ENCODE measurements at regions of chr9 and their contacts with region 1.

Region 1: DNA sequence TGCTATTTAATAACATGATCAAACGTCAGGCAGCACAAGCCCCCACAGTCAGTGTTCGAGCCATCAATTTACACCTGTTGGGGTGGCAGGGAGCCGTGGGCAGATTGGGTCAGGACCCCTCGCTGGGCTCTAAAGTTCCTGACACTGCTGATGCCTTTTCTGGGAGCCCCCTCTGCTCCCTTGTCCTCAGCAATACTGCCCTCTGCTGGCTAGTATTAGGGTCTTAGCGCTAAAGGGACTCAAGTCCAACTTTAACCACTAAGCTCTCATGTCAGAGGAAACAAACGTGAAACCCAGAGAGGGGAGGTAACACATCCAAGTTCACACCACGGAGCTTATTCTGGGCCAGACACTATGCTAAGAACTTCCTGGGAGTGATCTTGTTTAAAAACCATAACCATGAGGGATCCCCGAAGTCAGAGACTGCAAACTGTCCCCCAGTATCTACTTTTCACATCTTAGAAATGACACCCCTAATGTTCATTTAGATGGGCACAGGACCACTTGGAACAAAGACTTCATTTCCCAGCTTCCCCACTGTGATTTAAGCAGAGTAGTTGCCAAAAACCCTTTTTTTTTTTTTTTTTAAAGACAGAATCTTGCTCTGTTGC is 20.4 kb downstream of the ANKS6 start:
- DNase-seq: no peak
- H3K4me3 ChIP-seq: no peak overlapping the region
- H3K27me3 ChIP-seq: no peaks in the 10 kb centered on the region
- CTCF ChIP-seq: peak; percentile 81

Region 2: GRCh38 chr9:97921959-97922724 is 853.8 kb before region 1 on chr9 and contains the start of gene TRMO:
- CTCF ChIA-PET with region 1: interaction called, 15 read pairs
- POLR2A ChIA-PET with region 1: no interaction called
- DNase-seq: peak; percentile 81
- H3K4me3 ChIP-seq: peak within 1 kb of the TSS; percentile 56
- H3K27me3 ChIP-seq: 0 out of 2 replicates have a peak, but pooled peaks cover 2% of the 10 kb centered on the region
- CTCF ChIP-seq: peak; percentile 76
- polyA plus RNA-seq, gene TRMO: 11.2 and 17.2 TPM in 2 replicates

Region 3: GRCh38 chr9:98315551-98316060 is 460.3 kb before region 1 on chr9:
- CTCF ChIA-PET with region 1: interaction called, 150 read pairs
- POLR2A ChIA-PET with region 1: no interaction called
- DNase-seq: no peak
- H3K4me3 ChIP-seq: no peak overlapping the region
- H3K27me3 ChIP-seq: no peaks in the 10 kb centered on the region
- CTCF ChIP-seq: peak; percentile 96

Region 4: GRCh38 chr9:98707166-98708102 is 68.5 kb before region 1 on chr9:
- CTCF ChIA-PET with region 1: interaction called, 21 read pairs
- POLR2A ChIA-PET with region 1: no interaction called
- DNase-seq: no peak
- H3K4me3 ChIP-seq: peak overlapping the region; percentile 30; the same call in 1 of the 2 replicates
- H3K27me3 ChIP-seq: peaks cover 34% of the 10 kb centered on the region
- CTCF ChIP-seq: peak; percentile 79

Region 5: GRCh38 chr9:98755006-98755575 is 20.8 kb before region 1 on chr9:
- CTCF ChIA-PET with region 1: interaction called, 10 read pairs
- POLR2A ChIA-PET with region 1: no interaction called
- DNase-seq: no peak
- H3K4me3 ChIP-seq: no peak overlapping the region
- H3K27me3 ChIP-seq: no peaks in the 10 kb centered on the region
- CTCF ChIP-seq: no peak

Region 6: DNA sequence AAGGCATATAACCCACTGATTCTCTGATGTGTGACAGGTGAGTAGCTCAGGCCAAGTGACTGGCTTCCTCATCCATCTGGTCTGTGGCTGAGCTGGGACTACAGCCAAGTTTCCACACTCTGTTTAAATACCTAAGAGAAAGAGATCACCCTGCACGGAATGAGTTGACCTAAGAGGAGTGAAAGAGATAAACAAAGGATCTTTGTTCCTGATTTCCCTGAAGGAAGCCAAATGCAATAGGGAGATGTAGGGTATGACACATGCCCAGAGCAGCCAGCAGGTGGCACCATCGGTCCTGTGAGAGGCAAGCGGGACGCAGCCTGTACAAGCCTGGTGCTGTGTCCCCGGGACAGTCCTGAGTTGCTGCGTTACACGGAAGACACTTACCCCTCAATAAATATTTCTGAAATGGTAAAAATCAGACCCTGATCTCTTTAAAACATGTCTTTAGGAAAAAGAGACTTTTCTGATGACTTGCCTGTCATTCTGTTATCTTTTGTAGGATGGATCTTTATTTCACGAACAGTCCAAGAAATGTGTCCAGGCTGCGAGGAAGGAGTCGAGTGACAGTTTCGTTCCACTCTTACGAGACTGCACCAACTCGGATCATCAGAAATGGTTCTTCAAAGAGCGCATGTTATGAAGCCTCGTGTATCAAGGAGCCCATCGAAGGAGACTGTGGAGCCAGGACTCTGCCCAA is 72.7 kb after region 1 on chr9:
- CTCF ChIA-PET with region 1: no interaction called
- POLR2A ChIA-PET with region 1: no interaction called
- DNase-seq: no peak
- H3K4me3 ChIP-seq: peak overlapping the region; percentile 26
- H3K27me3 ChIP-seq: peaks cover 6% of the 10 kb centered on the region; the same call in 1 of the 2 replicates
- CTCF ChIP-seq: peak; percentile 95